ENCODE measurements at regions of chr15 and their contacts with region 1.

Region 1: DNA sequence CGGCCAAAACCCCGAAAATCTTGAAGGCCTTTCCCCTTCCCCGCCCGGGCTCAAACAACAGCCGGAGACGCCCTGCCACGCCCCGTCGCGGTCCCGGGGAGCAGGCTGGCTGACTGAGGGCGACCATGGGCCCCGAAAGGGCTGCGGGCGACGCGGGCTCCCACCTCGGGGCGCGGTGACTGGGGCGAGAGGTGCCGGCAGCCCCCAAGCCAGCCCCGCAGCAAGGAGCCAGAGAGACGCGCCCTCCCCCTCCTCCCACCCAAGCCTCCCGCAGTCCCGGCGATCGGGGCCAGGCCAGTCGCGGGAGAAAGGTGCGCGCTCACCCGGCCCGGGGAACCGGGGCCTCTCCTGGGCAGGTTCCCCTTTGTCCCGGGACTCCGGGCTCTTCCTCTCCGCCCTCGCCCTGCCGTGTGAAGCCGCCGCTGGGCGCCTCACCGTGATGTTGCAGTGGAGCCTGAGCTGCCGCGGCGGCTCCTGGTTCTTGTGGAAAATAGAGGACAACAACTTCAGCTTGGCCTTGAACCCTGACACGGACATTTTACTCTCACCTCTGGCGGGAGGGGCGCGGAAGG is 30.6 kb upstream of the ZSCAN2 start:
- DNase-seq: peak; percentile 70
- H3K4me3 ChIP-seq: peak overlapping the region; percentile 84 to 85
- H3K27ac ChIP-seq: peak overlapping the region; percentile 80 to 81
- H3K4me1 ChIP-seq: no peaks in the 10 kb centered on the region; a peak in 2 of 4 replicates
- H3K27me3 ChIP-seq: no peaks in the 10 kb centered on the region
- CTCF ChIP-seq: no peak
- EP300 ChIP-seq: no peak
- RAD21 ChIP-seq: no peak

Region 2: DNA sequence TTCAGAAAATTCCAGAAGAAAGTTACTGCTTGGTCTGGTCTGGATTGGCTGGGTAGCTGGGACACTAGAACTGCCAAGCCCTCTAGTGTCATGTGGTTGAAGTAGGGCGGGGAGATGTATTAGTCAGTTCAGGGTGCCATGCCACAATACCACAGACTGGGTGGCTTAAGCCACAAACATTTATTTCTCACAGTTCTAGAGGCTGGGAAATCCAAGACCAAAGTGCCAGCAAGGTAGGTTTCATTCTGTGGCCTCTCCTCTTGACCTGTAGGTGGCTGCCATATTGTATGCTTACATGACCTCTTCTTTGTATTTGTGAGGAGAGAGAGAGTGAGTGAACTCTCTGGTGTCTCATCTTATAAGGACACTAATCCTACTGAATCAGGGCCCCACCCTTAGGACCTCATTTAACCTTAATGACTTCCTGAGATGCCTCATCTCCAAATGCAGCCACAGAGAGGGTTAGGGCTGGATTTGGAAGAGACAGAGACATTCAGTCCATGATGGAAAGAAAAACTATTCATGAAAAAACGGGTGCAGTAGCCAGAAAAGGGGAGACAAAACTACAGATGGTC is 12.4 kb after region 1 on chr15:
- CTCF ChIA-PET with region 1: interaction called, 32 read pairs
- POLR2A ChIA-PET with region 1: no interaction called
- DNase-seq: no peak
- H3K4me3 ChIP-seq: no peak overlapping the region
- H3K27ac ChIP-seq: no peak overlapping the region
- H3K4me1 ChIP-seq: peaks cover 0 to 7% of the 10 kb centered on the region in 2 experiments; a peak in 1 of 4 replicates
- H3K27me3 ChIP-seq: no peaks in the 10 kb centered on the region
- CTCF ChIP-seq: no peak
- EP300 ChIP-seq: no peak
- RAD21 ChIP-seq: no peak

Region 3: GRCh38 chr15:84588053-84588874 is 18.0 kb after region 1 on chr15:
- CTCF ChIA-PET with region 1: interaction called, 32 read pairs
- POLR2A ChIA-PET with region 1: no interaction called
- DNase-seq: peak; percentile 94
- H3K4me3 ChIP-seq: peak overlapping the region; percentile 8 to 36; a peak in 2 of 4 replicates
- H3K27ac ChIP-seq: no peak overlapping the region
- H3K4me1 ChIP-seq: peaks cover 0 to 4% of the 10 kb centered on the region in 2 experiments; a peak in 1 of 4 replicates
- H3K27me3 ChIP-seq: no peaks in the 10 kb centered on the region
- CTCF ChIP-seq: peak; percentile 64
- EP300 ChIP-seq: no peak
- RAD21 ChIP-seq: peak; percentile 83